Calu3 (cell line): ENCODE measurements at regions of chr4 and their contacts with region 1.

Region 1: GRCh38 chr4:42519803-42520417 is 122.6 kb downstream of the SHISA3 start:
- DNase-seq: peak; percentile 57
- H3K4me3 Mint-ChIP-seq: no peak overlapping the region
- H3K27ac Mint-ChIP-seq: no peak overlapping the region
- H3K4me1 Mint-ChIP-seq: no peaks in the 10 kb centered on the region
- H3K27me3 Mint-ChIP-seq: peaks cover 10% of the 10 kb centered on the region
- CTCF ChIP-seq: peak; percentile 25

Region 2: DNA sequence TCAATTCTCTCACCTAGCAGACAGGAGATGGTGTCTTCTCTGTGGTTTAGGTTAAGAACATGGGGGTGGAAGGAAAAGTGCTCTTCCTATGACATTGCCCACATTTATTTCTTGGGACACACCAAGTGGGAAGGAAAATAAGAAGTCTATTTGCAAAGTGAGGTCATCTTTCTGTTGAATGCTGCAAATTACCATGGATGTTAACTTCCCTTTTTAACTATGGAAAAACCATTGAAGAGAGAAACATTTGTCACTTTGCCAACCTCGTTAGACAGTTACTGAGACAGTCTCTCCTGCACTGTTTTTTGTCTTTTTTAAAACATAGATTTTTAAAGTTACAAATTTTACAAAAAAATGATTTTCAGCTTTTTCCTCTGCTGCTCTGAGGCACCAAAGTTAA is 294.6 kb before region 1 on chr4:
- CTCF ChIA-PET with region 1: no interaction called
- intact Hi-C with region 1: no loop called
- DNase-seq: no peak
- H3K4me3 Mint-ChIP-seq: no peak overlapping the region
- H3K27ac Mint-ChIP-seq: no peak overlapping the region
- H3K4me1 Mint-ChIP-seq: no peaks in the 10 kb centered on the region
- H3K27me3 Mint-ChIP-seq: peaks cover 21% of the 10 kb centered on the region
- CTCF ChIP-seq: no peak

Region 3: GRCh38 chr4:42371306-42372252 is 148.3 kb before region 1 on chr4:
- CTCF ChIA-PET with region 1: interaction called, 26 read pairs
- intact Hi-C with region 1: loop called (anchors 1 kb)
- DNase-seq: no peak
- H3K4me3 Mint-ChIP-seq: no peak overlapping the region
- H3K27ac Mint-ChIP-seq: no peak overlapping the region
- H3K4me1 Mint-ChIP-seq: no peaks in the 10 kb centered on the region
- H3K27me3 Mint-ChIP-seq: peaks cover 15% of the 10 kb centered on the region
- CTCF ChIP-seq: no peak